ENCODE measurements at regions of chr17 and their contacts with region 1.

Region 1: DNA sequence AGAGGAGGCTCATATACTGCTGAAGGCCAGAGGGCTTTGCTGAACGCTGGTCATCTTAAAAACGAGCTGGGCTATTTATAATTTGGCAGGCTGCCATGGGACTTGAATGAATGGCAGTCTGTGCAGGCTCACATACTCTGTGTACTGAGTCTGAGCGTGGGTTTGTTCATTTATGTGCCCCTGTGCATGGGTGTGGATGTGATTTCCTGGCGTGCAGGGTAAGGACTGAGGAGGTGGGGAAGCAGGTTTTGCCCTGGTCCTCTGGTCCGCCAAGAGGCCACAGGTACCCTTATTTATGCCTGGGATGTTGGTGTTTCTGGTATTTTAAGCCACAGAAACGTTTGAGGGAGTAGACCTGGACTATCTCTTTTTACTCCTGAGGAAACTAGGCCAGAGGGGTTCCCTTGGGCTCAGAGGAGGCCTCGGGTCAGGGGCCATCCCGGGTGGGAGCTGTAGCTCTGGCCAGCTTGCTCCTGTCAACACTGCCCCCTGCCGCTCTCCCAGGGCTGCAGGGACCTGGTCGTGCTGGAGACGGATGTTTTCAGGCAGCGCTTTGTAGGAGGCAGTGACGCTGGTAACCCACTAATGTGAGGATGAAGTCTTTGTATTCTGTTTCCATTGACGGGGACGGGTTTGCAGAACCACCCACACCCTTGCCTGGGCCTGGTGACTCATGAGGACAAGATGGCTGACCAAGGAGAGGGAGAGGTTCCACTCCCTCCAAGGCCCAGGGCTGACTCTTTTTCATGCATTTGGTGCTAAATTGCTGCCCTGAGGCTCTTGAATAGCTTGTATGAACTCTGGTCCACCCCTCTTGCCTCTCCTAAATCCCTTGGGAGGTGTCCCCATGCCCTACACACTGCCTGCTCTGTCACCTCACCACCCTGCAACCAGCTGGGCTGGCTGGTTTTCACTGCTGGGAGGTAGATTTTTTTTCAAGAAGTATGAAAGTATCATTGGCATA is 184.5 kb downstream of the MSI2 start:
- DNase-seq: peak; percentile 80 to 89 (median 85)
- H3K4me3 ChIP-seq: no peak overlapping the region
- H3K27ac ChIP-seq: peak overlapping the region; percentile 66 to 68
- H3K4me1 ChIP-seq: peaks cover 47% of the 10 kb centered on the region
- H3K27me3 ChIP-seq: no peaks in the 10 kb centered on the region
- CTCF ChIP-seq: peak; percentile 22 to 86 (median 71)
- EP300 ChIP-seq: no peak
- POLR2A ChIP-seq: peak; percentile 22

Region 2: GRCh38 chr17:57363998-57364643 is 76.7 kb before region 1 on chr17:
- intact Hi-C with region 1: loop called in 1 of 4 experiments (anchors 2 kb)
- DNase-seq: no peak
- H3K4me3 ChIP-seq: no peak overlapping the region
- H3K27ac ChIP-seq: no peak overlapping the region
- H3K4me1 ChIP-seq: peaks cover 26% of the 10 kb centered on the region
- H3K27me3 ChIP-seq: no peaks in the 10 kb centered on the region
- CTCF ChIP-seq: no peak
- EP300 ChIP-seq: no peak
- POLR2A ChIP-seq: no peak